Activated T-helper 2 cell treated with anti-CD3 and anti-CD28 coated beads, Interferon-gamma antibody, Interleukin-2, Interleukin-4, amounts not matched to agents 10 μg/mL and 5 μg/mL and 100 μg/mL, durations not matched to agents 14 hours and 24 hours and 36 hours (primary cell): ENCODE measurements at regions of chr2 and their contacts with region 1.

Region 1: DNA sequence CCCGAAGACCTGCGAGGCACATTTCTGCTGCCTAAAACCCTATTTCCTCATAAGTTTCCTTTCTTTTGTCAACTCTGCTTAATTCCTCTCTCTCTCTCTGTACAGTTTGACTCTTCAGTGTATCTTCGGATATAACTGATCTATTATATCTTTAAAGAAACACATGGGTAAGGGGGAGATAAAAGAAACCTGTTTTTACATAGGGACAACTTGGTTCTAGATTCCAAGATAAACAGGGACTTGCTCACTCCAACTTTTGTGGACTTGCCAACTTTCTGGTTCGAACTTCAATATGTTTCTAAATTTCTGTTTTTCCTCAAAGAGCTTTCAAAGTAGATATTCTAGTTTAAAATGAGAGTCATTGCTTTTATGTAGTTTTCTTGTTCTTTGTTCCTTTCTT is 182.7 kb upstream of the EPC2 start:
- DNase-seq: no peak
- H3K4me3 Mint-ChIP-seq: no peak overlapping the region
- H3K27ac Mint-ChIP-seq: no peak overlapping the region
- H3K4me1 Mint-ChIP-seq: no peaks in the 10 kb centered on the region
- H3K27me3 Mint-ChIP-seq: no peaks in the 10 kb centered on the region

Region 2: GRCh38 chr2:148447877-148448276 is 14.0 kb before region 1 on chr2:
- intact Hi-C with region 1: loop called (anchors 2 kb)
- DNase-seq: no peak
- H3K4me3 Mint-ChIP-seq: no peak overlapping the region
- H3K27ac Mint-ChIP-seq: no peak overlapping the region
- H3K4me1 Mint-ChIP-seq: no peaks in the 10 kb centered on the region
- H3K27me3 Mint-ChIP-seq: no peaks in the 10 kb centered on the region